ENCODE measurements at regions of chr4 and their contacts with region 1.

Region 1: DNA sequence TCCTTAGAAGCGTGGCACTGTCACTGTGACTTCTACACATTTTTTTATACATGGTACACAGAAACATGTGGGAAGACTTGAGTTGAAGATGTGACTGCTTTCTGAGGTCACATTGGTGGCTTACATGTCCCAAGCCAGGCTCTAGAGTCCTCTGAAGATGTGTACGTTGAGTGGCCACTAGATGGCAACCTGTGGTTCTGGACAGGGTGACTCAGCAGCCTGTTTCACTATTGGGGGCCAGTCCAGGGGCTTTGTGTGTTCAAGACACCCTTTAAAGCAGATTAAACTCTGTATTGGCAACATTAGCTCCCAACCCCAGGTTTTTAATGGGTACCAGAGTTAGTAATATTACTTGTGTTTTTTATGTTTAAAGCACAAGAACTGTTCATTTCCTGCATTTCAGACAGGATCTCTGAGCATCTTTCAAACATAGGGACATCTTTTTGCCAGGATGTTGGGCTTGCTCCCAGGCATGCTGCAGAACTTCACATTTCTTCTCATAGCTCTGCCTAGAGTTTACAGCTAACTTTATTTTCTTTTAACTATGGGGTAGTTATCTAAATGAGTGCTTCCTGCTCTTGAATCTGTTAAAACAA is 53.0 kb downstream of the DCUN1D4 start:
- DNase-seq: peak; percentile 74
- H3K4me3 ChIP-seq: no peak overlapping the region
- H3K27ac ChIP-seq: peak overlapping the region; percentile 55
- H3K4me1 ChIP-seq: peaks cover 13% of the 10 kb centered on the region
- H3K27me3 ChIP-seq: no peaks in the 10 kb centered on the region
- CTCF ChIP-seq: peak; percentile 82 to 87
- POLR2A ChIP-seq: no peak

Region 2: DNA sequence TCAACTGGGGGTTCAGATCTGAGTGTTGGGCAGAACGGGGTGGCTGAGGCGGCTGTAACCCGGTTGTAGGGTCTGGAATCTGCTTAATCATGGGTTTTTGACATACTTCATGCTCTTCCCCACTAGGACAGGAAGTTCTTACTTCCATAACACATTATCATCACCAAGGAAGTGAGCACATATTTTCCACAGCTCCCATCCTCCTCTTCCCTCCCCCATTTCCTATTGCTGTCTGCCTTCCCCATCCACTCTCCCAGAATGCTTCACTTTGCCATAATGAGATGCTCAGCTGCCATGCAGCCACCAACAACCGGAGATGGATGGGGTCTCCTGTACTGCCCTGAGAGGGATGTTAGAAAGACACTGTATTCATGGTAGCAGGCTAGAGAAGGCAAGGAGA is 59.4 kb before region 1 on chr4:
- CTCF ChIA-PET with region 1: interaction called, 3 read pairs
- POLR2A ChIA-PET with region 1: no interaction called
- dilution Hi-C with region 1: no loop called
- intact Hi-C with region 1: loop called (anchors 5 kb)
- DNase-seq: no peak
- H3K4me3 ChIP-seq: no peak overlapping the region
- H3K27ac ChIP-seq: no peak overlapping the region
- H3K4me1 ChIP-seq: no peaks in the 10 kb centered on the region
- H3K27me3 ChIP-seq: peaks cover 10 to 13% of the 10 kb centered on the region in 2 experiments
- CTCF ChIP-seq: no peak
- POLR2A ChIP-seq: no peak

Region 3: GRCh38 chr4:51906167-51906958 is 10.5 kb after region 1 on chr4:
- CTCF ChIA-PET with region 1: interaction called, 16 read pairs
- POLR2A ChIA-PET with region 1: no interaction called
- dilution Hi-C with region 1: no loop called
- intact Hi-C with region 1: no loop called
- DNase-seq: peak; percentile 87
- H3K4me3 ChIP-seq: no peak overlapping the region
- H3K27ac ChIP-seq: peak overlapping the region; percentile 62
- H3K4me1 ChIP-seq: peaks cover 27% of the 10 kb centered on the region
- H3K27me3 ChIP-seq: no peaks in the 10 kb centered on the region
- CTCF ChIP-seq: no peak
- POLR2A ChIP-seq: peak; percentile 12

Region 4: GRCh38 chr4:52051619-52052474 is 155.9 kb after region 1 on chr4:
- CTCF ChIA-PET with region 1: no interaction called
- POLR2A ChIA-PET with region 1: no interaction called
- dilution Hi-C with region 1: no loop called
- intact Hi-C with region 1: no loop called
- DNase-seq: peak; percentile 90
- H3K4me3 ChIP-seq: peak overlapping the region; percentile 71 to 74 (median 72)
- H3K27ac ChIP-seq: peak overlapping the region; percentile 10
- H3K4me1 ChIP-seq: peaks cover 12% of the 10 kb centered on the region
- H3K27me3 ChIP-seq: peaks cover 23 to 41% of the 10 kb centered on the region in 2 experiments
- CTCF ChIP-seq: no peak
- POLR2A ChIP-seq: peak; percentile 69

Region 5: DNA sequence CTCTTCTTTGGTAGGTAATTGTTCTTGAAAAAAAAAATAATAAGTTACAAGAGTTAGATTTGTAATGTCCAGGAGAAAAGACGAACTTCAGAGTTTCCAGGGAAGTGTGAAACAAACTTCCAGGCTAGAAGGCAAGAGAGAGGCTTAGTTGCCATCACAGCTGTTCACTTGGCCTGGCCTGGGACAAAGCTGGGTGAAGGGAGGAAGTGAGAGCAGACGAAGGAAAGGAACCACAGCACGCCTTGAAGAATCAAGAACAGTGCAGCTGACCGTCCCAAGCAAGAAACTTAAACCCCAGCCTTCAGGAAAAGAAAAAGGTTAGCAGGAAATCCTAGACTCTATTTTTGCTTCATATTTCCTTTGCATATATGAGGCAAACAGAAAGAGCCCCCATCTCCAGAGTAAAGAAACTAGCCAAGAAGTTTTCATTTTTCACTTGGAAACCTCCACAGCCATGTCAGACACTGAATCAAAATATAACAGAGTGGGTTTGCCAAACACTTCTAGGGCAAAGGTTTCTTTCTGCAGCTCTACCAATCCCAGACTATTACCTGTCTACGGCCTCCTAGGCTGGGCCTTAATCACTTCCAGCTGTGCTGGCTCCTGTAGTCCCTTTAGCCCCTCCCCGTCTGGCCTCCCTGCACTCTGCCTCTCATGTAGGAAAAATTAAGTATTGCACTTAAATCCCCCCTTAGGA is 364.8 kb after region 1 on chr4:
- CTCF ChIA-PET with region 1: no interaction called
- POLR2A ChIA-PET with region 1: no interaction called
- dilution Hi-C with region 1: no loop called
- intact Hi-C with region 1: no loop called
- DNase-seq: no peak
- H3K4me3 ChIP-seq: no peak overlapping the region
- H3K27ac ChIP-seq: no peak overlapping the region
- H3K4me1 ChIP-seq: no peaks in the 10 kb centered on the region
- H3K27me3 ChIP-seq: no peaks in the 10 kb centered on the region
- CTCF ChIP-seq: no peak
- POLR2A ChIP-seq: no peak

Measured in endothelial cell of umbilical vein (primary cell).